Vagina (tissue), 2 donors: ENCODE measurements at regions of chr20 and their contacts with region 1.

Region 1: GRCh38 chr20:58650776-58651558 is at the start of gene STX16:
- DNase-seq: peak; percentile 90 to 96
- H3K4me3 ChIP-seq: peak within 1 kb of the TSS; percentile 78 to 87
- H3K27ac ChIP-seq: peak within 1 kb of the TSS; percentile 91
- H3K4me1 ChIP-seq: peaks cover 70% of the 10 kb centered on the region
- H3K27me3 ChIP-seq: no peaks in the 10 kb centered on the region
- CTCF ChIP-seq: peak; percentile 25 to 67 (median 55)
- POLR2A ChIP-seq: peak in 1 of 2 donors; percentile 32
- total RNA-seq, gene STX16: 49.4 TPM

Region 2: DNA sequence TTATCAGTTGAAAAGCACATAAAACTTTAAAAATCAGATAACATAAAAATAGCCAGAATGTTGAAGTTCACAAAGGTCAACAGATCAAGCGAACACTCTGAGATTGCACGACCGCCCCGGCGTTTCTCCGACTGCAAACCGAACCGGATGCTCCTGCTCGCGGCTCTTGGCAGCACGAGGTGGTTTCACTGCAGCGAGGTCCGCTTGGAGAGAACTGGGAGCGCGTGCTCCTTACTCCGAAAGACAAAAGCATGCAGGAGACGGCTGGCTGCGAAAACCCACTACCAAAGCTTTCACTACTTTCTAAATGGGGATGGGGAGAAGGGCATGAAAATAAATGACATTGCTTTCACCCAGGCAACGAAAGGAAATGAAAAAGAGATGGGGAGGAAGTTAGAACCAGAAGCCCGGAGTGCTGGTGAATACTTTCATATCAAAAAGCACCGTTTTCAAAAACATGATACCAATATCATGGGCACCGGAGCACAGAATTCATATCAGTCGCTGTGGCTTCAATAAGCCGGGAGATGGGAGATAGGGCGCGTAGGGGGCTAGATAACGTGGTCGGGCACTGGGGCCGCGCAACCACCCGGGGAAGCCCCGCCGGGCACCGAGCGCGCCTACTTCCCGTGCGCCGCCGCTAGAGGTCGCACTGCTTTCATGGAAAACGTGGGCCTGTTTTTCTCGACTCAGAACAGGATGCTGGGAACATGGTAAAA is 414.2 kb before region 1 on chr20:
- intact Hi-C with region 1: loop called (anchors 5 kb)
- DNase-seq: no peak
- H3K4me3 ChIP-seq: peak overlapping the region; percentile 37 to 38
- H3K27ac ChIP-seq: peak overlapping the region; percentile 61
- H3K4me1 ChIP-seq: peaks cover 6% of the 10 kb centered on the region
- H3K27me3 ChIP-seq: no peaks in the 10 kb centered on the region
- CTCF ChIP-seq: peak; percentile 85 to 95 (median 93)
- POLR2A ChIP-seq: no peak

Region 3: GRCh38 chr20:58471193-58472164 is 179.5 kb before region 1 on chr20:
- intact Hi-C with region 1: loop called (anchors 5 kb)
- DNase-seq: no peak
- H3K4me3 ChIP-seq: no peak overlapping the region
- H3K27ac ChIP-seq: no peak overlapping the region
- H3K4me1 ChIP-seq: peaks cover 15% of the 10 kb centered on the region
- H3K27me3 ChIP-seq: no peaks in the 10 kb centered on the region
- CTCF ChIP-seq: no peak
- POLR2A ChIP-seq: no peak

Region 4: DNA sequence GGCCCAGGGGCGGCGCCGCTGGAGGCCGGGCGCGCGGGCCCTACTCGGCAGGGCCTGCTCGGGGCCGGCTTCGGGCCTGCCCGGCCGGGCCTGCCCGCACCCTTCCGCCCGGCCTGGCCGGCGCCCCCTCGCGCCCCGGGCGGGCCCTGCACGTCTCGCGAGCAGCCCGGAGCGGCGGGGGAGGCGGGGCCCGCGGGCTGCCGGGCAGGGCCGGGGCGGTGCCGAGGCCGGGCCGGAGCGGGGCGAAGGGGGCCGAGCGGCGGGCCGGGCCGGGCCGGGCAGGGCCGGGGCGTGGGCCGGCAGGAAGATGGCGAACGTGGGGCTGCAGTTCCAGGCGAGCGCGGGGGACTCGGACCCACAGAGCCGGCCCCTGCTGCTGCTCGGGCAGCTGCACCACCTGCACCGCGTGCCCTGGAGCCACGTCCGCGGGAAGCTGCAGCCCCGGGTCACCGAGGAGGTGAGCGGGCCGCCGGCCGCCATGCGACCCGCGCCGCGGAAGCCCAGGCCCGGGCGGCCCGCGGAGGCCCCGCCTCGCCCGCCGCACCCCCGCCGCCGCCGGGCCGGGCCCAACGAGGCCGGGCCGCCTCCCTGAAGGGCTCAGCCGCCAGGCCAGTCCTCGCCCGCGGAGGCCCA is 41.7 kb after region 1 on chr20 and contains the start of gene NPEPL1:
- intact Hi-C with region 1: loop called (anchors 2 kb)
- DNase-seq: no peak
- H3K4me3 ChIP-seq: peak within 1 kb of the TSS; percentile 48 to 54
- H3K27ac ChIP-seq: peak within 1 kb of the TSS; percentile 77
- H3K4me1 ChIP-seq: peaks cover 38% of the 10 kb centered on the region
- H3K27me3 ChIP-seq: no peaks in the 10 kb centered on the region
- CTCF ChIP-seq: no peak
- POLR2A ChIP-seq: peak in 1 of 2 donors; percentile 10
- total RNA-seq, gene NPEPL1: 25.5 TPM